Endothelial cell of umbilical vein (primary cell): ENCODE measurements at regions of chr11 and their contacts with region 1.

Region 1: DNA sequence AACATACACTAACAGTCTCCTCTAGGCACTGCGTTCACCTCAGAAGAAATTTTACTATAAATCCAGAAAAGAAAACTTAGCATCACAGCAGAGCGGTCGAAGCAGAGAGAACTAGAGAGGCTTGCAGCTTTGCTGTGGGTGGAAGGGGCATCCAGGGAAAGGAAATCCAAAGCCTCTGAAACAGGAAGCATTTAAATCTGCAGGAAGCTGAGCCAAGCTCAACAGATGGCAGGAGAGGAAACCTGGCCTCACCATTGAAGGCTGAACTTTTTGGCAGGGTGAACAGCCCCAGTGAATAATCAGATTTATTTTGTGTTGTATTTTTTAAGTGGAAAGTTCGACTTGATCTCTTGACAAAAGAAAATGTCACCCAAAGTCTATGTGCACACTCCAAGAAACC is 858.1 kb downstream of the OPCML start:
- DNase-seq: peak; percentile 53
- H3K4me3 ChIP-seq: no peak overlapping the region
- H3K27ac ChIP-seq: no peak overlapping the region
- H3K4me1 ChIP-seq: no peaks in the 10 kb centered on the region
- H3K27me3 ChIP-seq: no peaks in the 10 kb centered on the region
- CTCF ChIP-seq: no peak
- POLR2A ChIP-seq: no peak

Region 2: GRCh38 chr11:132519241-132519815 is 154.8 kb before region 1 on chr11:
- CTCF ChIA-PET with region 1: no interaction called
- POLR2A ChIA-PET with region 1: no interaction called
- dilution Hi-C with region 1: no loop called
- intact Hi-C with region 1: no loop called
- DNase-seq: no peak
- H3K4me3 ChIP-seq: no peak overlapping the region
- H3K27ac ChIP-seq: no peak overlapping the region
- H3K4me1 ChIP-seq: no peaks in the 10 kb centered on the region
- H3K27me3 ChIP-seq: no peaks in the 10 kb centered on the region
- CTCF ChIP-seq: no peak
- POLR2A ChIP-seq: no peak

Region 3: DNA sequence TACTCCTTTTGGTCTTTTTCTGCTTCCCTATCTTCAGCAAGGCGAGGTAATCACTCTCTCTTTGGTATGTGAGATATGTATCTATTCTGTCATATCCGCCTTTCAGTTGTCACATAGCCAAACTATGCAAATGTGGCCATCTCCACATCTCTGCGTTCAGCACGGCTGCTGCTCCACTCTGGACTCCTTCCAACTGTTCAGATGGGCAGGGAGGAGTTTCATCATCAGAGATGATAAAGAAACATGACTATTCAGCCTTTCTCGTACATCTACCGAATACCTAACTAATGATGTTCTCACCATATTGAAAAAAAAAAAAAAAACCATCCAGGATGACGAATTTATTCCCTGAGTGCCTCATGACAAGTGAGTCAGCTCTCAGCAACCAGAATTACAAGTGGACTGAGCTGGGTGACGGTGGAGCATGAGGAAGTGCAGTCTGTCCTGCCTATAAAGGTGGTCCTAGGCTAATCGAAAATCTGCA is 41.5 kb before region 1 on chr11:
- CTCF ChIA-PET with region 1: no interaction called
- POLR2A ChIA-PET with region 1: no interaction called
- dilution Hi-C with region 1: no loop called
- intact Hi-C with region 1: loop called (anchors 2 kb)
- DNase-seq: peak; percentile 28
- H3K4me3 ChIP-seq: no peak overlapping the region
- H3K27ac ChIP-seq: no peak overlapping the region
- H3K4me1 ChIP-seq: no peaks in the 10 kb centered on the region
- H3K27me3 ChIP-seq: no peaks in the 10 kb centered on the region
- CTCF ChIP-seq: no peak
- POLR2A ChIP-seq: no peak

Region 4: DNA sequence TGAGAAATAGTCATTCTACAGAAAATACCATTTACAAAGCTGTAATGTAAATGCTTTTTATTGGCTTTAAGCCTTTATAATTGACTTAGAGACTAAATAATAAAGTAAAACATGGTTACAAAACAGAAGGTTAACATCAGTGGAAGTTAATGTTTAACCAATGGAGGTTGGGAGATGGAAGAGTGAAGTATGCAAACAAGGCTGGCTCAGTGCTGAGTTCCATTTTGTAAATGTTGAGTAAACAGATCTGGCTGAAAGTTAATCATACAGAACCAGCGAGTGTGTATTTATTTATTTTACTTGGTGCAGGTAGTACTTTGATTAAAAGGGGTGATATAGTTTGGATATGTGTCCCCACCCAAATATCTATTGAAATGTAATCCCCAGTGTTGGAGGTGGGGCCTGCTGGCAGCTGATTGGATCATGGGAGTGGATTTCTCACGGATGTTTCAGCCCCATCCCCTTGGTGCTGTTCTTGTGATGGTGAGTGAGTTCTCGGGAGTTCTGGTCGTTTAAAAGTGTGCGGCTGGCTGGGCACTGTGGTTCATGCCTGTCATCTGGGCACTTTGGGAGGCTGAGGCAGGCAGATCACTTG is 30.7 kb after region 1 on chr11:
- CTCF ChIA-PET with region 1: no interaction called
- POLR2A ChIA-PET with region 1: no interaction called
- dilution Hi-C with region 1: no loop called
- intact Hi-C with region 1: no loop called
- DNase-seq: no peak
- H3K4me3 ChIP-seq: no peak overlapping the region
- H3K27ac ChIP-seq: no peak overlapping the region
- H3K4me1 ChIP-seq: no peaks in the 10 kb centered on the region
- H3K27me3 ChIP-seq: no peaks in the 10 kb centered on the region
- CTCF ChIP-seq: no peak
- POLR2A ChIP-seq: no peak